ENCODE measurements at regions of chr18 and their contacts with region 1.

Region 1: GRCh38 chr18:58768293-58768974 is 96.2 kb upstream of the ZNF532 start:
- DNase-seq: peak; percentile 90
- ATAC-seq: peak; percentile 92
- H3K4me3 Mint-ChIP-seq: peak overlapping the region; percentile 70
- H3K27ac Mint-ChIP-seq: no peak overlapping the region
- H3K4me1 Mint-ChIP-seq: peaks cover 12% of the 10 kb centered on the region
- H3K27me3 Mint-ChIP-seq: peaks cover 8% of the 10 kb centered on the region
- CTCF ChIP-seq: peak; percentile 75

Region 2: DNA sequence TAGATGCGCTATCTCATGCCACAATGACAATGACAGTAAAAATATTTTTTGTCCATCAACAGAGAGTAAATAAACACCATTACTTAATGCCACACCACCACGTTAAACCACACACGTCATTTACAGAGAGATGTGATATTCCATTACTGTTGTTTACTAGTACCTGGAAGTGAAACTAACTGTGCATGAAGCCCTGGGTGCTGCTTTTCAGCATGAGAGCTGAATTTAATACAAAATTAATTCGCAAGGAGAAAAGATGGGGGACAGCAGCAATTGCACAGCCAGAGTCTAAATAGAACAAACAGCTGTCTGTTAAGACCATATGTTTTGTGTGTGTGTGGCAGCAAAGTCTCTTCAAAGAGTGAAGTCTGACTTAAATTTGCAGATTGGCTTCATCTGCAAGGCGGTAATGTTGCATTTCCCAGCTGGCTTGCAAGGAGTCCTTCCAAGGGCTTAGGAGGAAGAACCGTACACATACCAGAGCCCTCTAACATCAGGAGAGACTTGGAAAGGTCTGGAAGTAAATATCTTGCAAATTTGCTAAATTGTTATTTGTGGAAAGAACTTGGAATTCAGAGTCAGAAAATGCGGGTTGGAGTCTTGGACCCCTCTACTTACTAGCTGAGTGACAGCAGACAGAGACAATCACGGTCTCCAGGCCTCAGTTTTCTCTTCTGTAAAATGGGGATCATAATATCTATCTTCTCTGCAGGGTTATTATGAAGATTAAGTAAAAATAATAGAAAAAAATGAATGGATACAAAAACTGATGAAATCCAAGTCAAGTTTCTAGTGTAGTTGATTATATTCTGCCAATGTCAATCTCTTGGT is 267.2 kb before region 1 on chr18:
- CTCF ChIA-PET with region 1: interaction called, 43 read pairs
- POLR2A ChIA-PET with region 1: no interaction called
- DNase-seq: no peak
- ATAC-seq: no peak
- H3K4me3 Mint-ChIP-seq: no peak overlapping the region
- H3K27ac Mint-ChIP-seq: no peak overlapping the region
- H3K4me1 Mint-ChIP-seq: peaks cover 14% of the 10 kb centered on the region
- H3K27me3 Mint-ChIP-seq: no peaks in the 10 kb centered on the region
- CTCF ChIP-seq: no peak

Region 3: GRCh38 chr18:58529714-58530354 is 238.6 kb before region 1 on chr18:
- CTCF ChIA-PET with region 1: interaction called, 144 read pairs
- POLR2A ChIA-PET with region 1: interaction called, 4 read pairs
- DNase-seq: peak; percentile 82
- ATAC-seq: peak; percentile 92
- H3K4me3 Mint-ChIP-seq: no peak overlapping the region
- H3K27ac Mint-ChIP-seq: no peak overlapping the region
- H3K4me1 Mint-ChIP-seq: peaks cover 10% of the 10 kb centered on the region
- H3K27me3 Mint-ChIP-seq: no peaks in the 10 kb centered on the region
- CTCF ChIP-seq: peak; percentile 77

Region 4: GRCh38 chr18:58716060-58716756 is 52.2 kb before region 1 on chr18:
- CTCF ChIA-PET with region 1: interaction called, 15 read pairs
- POLR2A ChIA-PET with region 1: no interaction called
- DNase-seq: no peak
- ATAC-seq: no peak
- H3K4me3 Mint-ChIP-seq: no peak overlapping the region
- H3K27ac Mint-ChIP-seq: 0 out of 2 replicates have a peak overlapping the region, but pooled peaks have one; percentile 3
- H3K4me1 Mint-ChIP-seq: peaks cover 2% of the 10 kb centered on the region; the same call in 1 of the 2 replicates
- H3K27me3 Mint-ChIP-seq: no peaks in the 10 kb centered on the region
- CTCF ChIP-seq: no peak

Region 5: DNA sequence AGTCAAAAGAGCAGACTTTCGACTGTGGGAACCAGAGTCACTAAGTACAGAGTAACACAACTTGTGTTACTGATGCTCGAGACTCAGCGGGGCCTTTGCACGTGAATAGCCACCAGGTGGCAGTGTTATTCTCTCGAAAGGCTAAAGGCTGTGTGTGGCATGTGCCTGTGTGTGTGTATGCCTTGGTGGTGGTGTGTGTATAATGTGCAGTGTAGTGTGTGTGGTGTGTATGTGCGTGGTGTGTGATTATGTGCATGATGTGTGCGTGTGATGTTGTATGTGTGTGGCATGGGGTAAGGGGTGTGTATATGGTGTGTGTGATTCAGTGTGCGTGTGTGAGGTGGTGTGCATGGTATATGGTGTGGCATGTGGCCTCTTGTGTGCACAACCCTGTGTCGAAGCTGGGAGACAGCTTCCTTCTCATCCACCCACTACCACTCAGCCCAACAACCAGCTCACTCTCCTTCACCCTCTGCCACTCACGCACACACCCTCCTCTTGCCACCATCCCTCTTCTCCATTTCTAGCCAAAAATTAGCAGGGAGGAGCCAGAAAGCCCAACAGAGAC is 13.3 kb after region 1 on chr18:
- CTCF ChIA-PET with region 1: interaction called, 26 read pairs
- POLR2A ChIA-PET with region 1: interaction called, 4 read pairs
- DNase-seq: peak; percentile 86
- ATAC-seq: peak; percentile 78
- H3K4me3 Mint-ChIP-seq: no peak overlapping the region
- H3K27ac Mint-ChIP-seq: no peak overlapping the region
- H3K4me1 Mint-ChIP-seq: peaks cover 32% of the 10 kb centered on the region
- H3K27me3 Mint-ChIP-seq: no peaks in the 10 kb centered on the region; the same call in 1 of the 2 replicates
- CTCF ChIP-seq: peak; percentile 86

Region 6: DNA sequence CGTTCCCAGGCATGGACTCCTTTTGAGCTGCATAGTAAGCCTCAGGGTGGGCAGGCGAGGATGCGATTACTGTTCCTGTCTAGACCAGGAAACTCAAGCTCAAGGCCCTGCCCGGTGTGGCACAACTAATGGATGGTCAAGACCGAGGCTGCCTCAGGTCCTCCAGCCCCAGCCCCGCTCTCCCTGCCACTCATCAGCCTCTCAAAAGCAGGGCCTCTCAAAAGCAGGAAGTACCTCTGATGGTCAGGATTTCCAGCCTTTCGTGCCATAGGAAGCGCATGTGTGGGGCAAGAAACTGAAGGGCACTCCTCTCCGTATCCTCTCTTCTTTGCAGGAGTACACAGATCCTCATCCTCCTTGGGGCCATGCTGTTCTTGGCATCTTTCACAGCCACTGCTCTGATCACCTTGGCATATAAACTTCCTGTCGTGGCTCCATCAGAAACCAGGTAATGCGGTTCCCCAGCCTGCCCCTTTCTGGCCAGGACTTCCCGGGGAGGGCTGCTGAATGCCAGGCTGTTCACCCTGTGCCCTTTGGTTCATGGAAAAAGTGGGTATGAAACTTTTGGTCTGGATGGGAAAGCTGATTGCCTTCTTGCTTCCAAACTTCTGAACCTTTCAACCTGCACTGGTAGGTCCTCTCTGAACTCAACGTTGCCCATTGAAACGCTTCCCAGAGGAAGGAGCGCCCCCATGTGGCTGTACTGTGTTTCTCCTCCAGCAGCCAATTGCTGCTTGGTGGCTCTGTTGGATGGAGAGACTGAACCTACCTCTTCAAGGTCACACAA is 288.5 kb after region 1 on chr18:
- CTCF ChIA-PET with region 1: interaction called, 91 read pairs
- POLR2A ChIA-PET with region 1: no interaction called
- DNase-seq: peak; percentile 85
- ATAC-seq: peak; percentile 84
- H3K4me3 Mint-ChIP-seq: no peak overlapping the region
- H3K27ac Mint-ChIP-seq: no peak overlapping the region
- H3K4me1 Mint-ChIP-seq: peaks cover 11% of the 10 kb centered on the region
- H3K27me3 Mint-ChIP-seq: no peaks in the 10 kb centered on the region
- CTCF ChIP-seq: peak; percentile 86

Region 7: DNA sequence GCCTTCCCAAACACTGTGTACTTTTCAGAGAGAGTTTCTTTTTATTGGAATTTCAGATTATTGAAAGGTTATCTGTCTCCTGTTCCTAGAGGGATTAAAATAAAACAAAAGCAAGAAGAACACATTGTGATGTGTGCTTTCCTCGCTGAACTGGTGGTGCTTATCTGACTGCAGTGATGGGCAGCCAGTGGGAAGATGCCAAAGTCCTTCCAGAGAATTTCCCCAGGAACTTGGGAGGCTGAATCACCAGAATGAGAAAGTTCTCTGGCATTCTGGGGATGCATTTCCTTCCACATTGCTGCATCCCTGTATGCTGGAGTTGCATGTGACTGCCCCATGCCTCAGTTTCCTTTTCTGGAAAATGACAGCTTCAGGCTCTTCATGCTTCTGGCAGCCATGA is 317.4 kb after region 1 on chr18:
- CTCF ChIA-PET with region 1: interaction called, 42 read pairs
- POLR2A ChIA-PET with region 1: no interaction called
- DNase-seq: no peak
- ATAC-seq: no peak
- H3K4me3 Mint-ChIP-seq: no peak overlapping the region
- H3K27ac Mint-ChIP-seq: no peak overlapping the region
- H3K4me1 Mint-ChIP-seq: peaks cover 2% of the 10 kb centered on the region
- H3K27me3 Mint-ChIP-seq: peaks cover 10% of the 10 kb centered on the region
- CTCF ChIP-seq: no peak

Measured in WTC11 (cell line).